B cell (primary cell): ENCODE measurements at regions of chr9 and their contacts with region 1.

Region 1: GRCh38 chr9:117800389-117800788 is 96.2 kb downstream of the TLR4 start:
- DNase-seq: no peak
- ATAC-seq: no peak
- H3K4me3 ChIP-seq: no peak overlapping the region
- H3K4me3 Mint-ChIP-seq: no peak overlapping the region
- H3K27ac ChIP-seq: no peak overlapping the region
- H3K27ac Mint-ChIP-seq: no peak overlapping the region
- H3K4me1 ChIP-seq: no peaks in the 10 kb centered on the region
- H3K4me1 Mint-ChIP-seq: no peaks in the 10 kb centered on the region
- H3K27me3 ChIP-seq: peaks cover 0 to 12% (median 5%) of the 10 kb centered on the region in 4 experiments
- H3K27me3 Mint-ChIP-seq: peaks cover 59% of the 10 kb centered on the region
- CTCF ChIP-seq: no peak

Region 2: DNA sequence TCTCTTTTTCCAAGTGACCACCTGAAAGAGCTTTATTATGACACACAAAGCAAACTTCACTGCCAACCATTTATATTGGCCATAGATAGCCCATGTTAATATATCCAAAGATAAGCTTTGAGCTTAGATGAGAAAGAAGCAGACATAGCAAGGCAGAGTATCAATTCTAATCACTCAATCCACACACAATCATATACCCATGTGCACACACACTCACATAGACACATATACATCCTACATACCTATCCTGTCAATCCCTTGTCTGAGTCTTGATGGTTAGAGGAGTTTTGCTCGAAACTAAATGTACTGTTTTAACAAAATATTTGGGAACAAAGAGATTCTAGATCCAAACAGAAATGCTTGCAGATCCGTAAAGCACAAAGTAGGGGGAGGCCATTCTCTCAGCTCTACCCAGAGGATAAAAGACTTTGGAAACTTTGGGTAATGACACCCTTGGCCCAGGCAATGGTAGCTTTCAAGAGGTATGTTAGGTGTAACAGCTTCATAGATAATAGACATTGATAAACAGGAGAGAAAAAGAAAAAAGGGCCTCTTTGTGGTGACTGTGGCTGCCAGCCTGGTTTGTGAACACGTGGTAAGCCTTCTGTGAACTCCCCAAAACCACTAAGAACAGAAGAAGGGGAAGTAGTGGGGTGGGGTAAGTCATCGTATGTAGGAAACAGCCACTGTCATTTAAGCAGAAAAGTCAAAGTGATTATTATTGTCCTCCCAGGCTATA is 25.4 kb after region 1 on chr9:
- CTCF ChIA-PET with region 1: no interaction called
- POLR2A ChIA-PET with region 1: no interaction called
- intact Hi-C with region 1: loop called (anchors 2 kb)
- DNase-seq: peak; percentile 81
- ATAC-seq: peak; percentile 95
- H3K4me3 ChIP-seq: peak overlapping the region in 2 of 5 experiments; percentile 24 to 46
- H3K4me3 Mint-ChIP-seq: peak overlapping the region; percentile 71
- H3K27ac ChIP-seq: no peak overlapping the region
- H3K27ac Mint-ChIP-seq: peak overlapping the region; percentile 74
- H3K4me1 ChIP-seq: peaks cover 31 to 33% of the 10 kb centered on the region in 2 donors
- H3K4me1 Mint-ChIP-seq: peaks cover 35% of the 10 kb centered on the region
- H3K27me3 ChIP-seq: peaks cover 0 to 23% (median 1%) of the 10 kb centered on the region in 4 experiments
- H3K27me3 Mint-ChIP-seq: peaks cover 20% of the 10 kb centered on the region
- CTCF ChIP-seq: no peak